Activated CD4-positive, alpha-beta memory T cell treated with anti-CD3 and anti-CD28 coated beads for 36 hours (primary cell): ENCODE measurements at regions of chr22 and their contacts with region 1.

Region 1: GRCh38 chr22:40856513-40857308 is at the starts of genes ST13 and XPNPEP3:
- DNase-seq: peak; percentile 98
- H3K4me3 Mint-ChIP-seq: peak within 1 kb of the TSS; percentile 98
- H3K27ac Mint-ChIP-seq: peak within 1 kb of the TSS; percentile 99
- H3K4me1 Mint-ChIP-seq: peaks cover 48% of the 10 kb centered on the region
- H3K27me3 Mint-ChIP-seq: no peaks in the 10 kb centered on the region
- total RNA-seq, gene ST13: 240 to 263 TPM
- total RNA-seq, gene XPNPEP3: 19.4 to 20.1 TPM

Region 2: GRCh38 chr22:40636380-40637182 is 220.1 kb before region 1 on chr22 and contains the start of gene MRTFA:
- CTCF ChIA-PET with region 1: no interaction called
- POLR2A ChIA-PET with region 1: no interaction called
- intact Hi-C with region 1: loop called (anchors 5 kb)
- DNase-seq: peak; percentile 100
- H3K4me3 Mint-ChIP-seq: peak within 1 kb of the TSS; percentile 91
- H3K27ac Mint-ChIP-seq: peak within 1 kb of the TSS; percentile 89
- H3K4me1 Mint-ChIP-seq: peaks cover 40% of the 10 kb centered on the region
- H3K27me3 Mint-ChIP-seq: no peaks in the 10 kb centered on the region
- total RNA-seq, gene MRTFA: 44.1 to 45.5 TPM

Region 3: GRCh38 chr22:40791241-40791640 is 65.5 kb before region 1 on chr22:
- CTCF ChIA-PET with region 1: no interaction called
- POLR2A ChIA-PET with region 1: no interaction called
- intact Hi-C with region 1: no loop called
- DNase-seq: no peak
- H3K4me3 Mint-ChIP-seq: no peak overlapping the region
- H3K27ac Mint-ChIP-seq: no peak overlapping the region
- H3K4me1 Mint-ChIP-seq: peaks cover 3% of the 10 kb centered on the region
- H3K27me3 Mint-ChIP-seq: no peaks in the 10 kb centered on the region

Region 4: GRCh38 chr22:40898850-40899357 is 42.2 kb after region 1 on chr22:
- CTCF ChIA-PET with region 1: interaction called, 14 read pairs
- POLR2A ChIA-PET with region 1: no interaction called
- intact Hi-C with region 1: loop called (anchors 2 kb)
- DNase-seq: peak; percentile 41
- H3K4me3 Mint-ChIP-seq: peak overlapping the region; percentile 20
- H3K27ac Mint-ChIP-seq: peak overlapping the region; percentile 88
- H3K4me1 Mint-ChIP-seq: peaks cover 14% of the 10 kb centered on the region
- H3K27me3 Mint-ChIP-seq: no peaks in the 10 kb centered on the region

Region 5: GRCh38 chr22:41381329-41382097 is 524.8 kb after region 1 on chr22 and contains the start of gene TEF:
- CTCF ChIA-PET with region 1: no interaction called
- POLR2A ChIA-PET with region 1: no interaction called
- intact Hi-C with region 1: loop called (anchors 5 kb)
- DNase-seq: peak; percentile 98
- H3K4me3 Mint-ChIP-seq: peak within 1 kb of the TSS; percentile 81
- H3K27ac Mint-ChIP-seq: peak within 1 kb of the TSS; percentile 86
- H3K4me1 Mint-ChIP-seq: peaks cover 15% of the 10 kb centered on the region
- H3K27me3 Mint-ChIP-seq: no peaks in the 10 kb centered on the region
- total RNA-seq, gene TEF: 1.4 to 1.6 TPM